WTC11 (cell line): ENCODE measurements at regions of chr2 and their contacts with region 1.

Region 1: GRCh38 chr2:72887754-72888437 is 688 bp downstream of the SPR start:
- DNase-seq: peak; percentile 97
- ATAC-seq: peak; percentile 68
- H3K4me3 Mint-ChIP-seq: peak overlapping the region; percentile 67
- H3K27ac Mint-ChIP-seq: no peak overlapping the region
- H3K4me1 Mint-ChIP-seq: peaks cover 18% of the 10 kb centered on the region
- H3K27me3 Mint-ChIP-seq: peaks cover 58% of the 10 kb centered on the region
- CTCF ChIP-seq: peak; percentile 82

Region 2: DNA sequence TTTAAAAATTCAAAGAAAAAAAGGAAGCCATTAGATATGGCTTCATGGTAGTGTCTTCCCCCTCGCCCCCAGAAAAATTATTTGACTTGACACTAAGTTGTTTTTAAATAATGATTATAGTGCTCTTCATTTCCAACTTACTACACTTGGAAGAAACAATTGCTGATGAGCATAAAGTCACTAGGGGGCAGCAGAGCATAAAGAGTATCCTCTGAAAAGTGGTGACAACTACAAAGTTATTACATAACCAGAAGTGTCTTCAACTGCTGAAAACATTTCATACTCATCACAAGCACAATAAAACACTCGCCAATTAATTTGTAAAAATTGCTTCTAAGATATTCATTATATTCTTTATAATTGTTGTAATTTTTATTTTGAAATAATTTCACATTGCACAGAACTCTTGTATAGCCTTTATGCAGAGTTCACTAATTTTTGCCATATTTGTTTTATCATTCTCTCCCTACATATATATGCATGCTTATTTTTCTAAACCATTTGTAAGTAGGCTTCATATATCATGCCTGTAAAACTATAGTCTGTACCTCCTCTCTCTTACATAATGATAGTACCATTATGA is 116.9 kb before region 1 on chr2:
- CTCF ChIA-PET with region 1: interaction called, 11 read pairs
- POLR2A ChIA-PET with region 1: no interaction called
- DNase-seq: peak; percentile 45
- ATAC-seq: no peak
- H3K4me3 Mint-ChIP-seq: no peak overlapping the region
- H3K27ac Mint-ChIP-seq: no peak overlapping the region
- H3K4me1 Mint-ChIP-seq: peaks cover 18% of the 10 kb centered on the region
- H3K27me3 Mint-ChIP-seq: no peaks in the 10 kb centered on the region
- CTCF ChIP-seq: peak; percentile 61; the same call in 1 of the 2 replicates

Region 3: DNA sequence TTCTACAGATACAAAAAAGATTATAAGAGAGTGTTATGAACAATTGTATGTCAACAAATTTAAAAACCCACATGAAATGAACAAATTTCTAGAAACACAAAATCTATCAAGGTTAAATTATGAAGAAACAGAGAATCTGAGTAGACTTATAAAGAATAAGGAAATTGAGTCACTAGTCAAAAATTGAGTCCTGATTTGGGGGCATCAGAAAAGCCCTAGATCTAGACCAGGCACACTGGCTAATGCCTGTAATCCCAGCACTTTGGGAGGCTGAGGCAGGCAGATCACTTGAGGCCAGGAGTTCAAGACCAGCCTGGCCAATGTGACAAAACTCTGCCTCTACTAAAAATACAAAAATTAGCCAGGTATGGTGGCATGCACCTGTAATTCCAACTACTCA is 16.0 kb before region 1 on chr2:
- CTCF ChIA-PET with region 1: interaction called, 14 read pairs
- POLR2A ChIA-PET with region 1: no interaction called
- DNase-seq: no peak
- ATAC-seq: no peak
- H3K4me3 Mint-ChIP-seq: no peak overlapping the region
- H3K27ac Mint-ChIP-seq: no peak overlapping the region
- H3K4me1 Mint-ChIP-seq: no peaks in the 10 kb centered on the region
- H3K27me3 Mint-ChIP-seq: peaks cover 32% of the 10 kb centered on the region
- CTCF ChIP-seq: no peak

Region 4: DNA sequence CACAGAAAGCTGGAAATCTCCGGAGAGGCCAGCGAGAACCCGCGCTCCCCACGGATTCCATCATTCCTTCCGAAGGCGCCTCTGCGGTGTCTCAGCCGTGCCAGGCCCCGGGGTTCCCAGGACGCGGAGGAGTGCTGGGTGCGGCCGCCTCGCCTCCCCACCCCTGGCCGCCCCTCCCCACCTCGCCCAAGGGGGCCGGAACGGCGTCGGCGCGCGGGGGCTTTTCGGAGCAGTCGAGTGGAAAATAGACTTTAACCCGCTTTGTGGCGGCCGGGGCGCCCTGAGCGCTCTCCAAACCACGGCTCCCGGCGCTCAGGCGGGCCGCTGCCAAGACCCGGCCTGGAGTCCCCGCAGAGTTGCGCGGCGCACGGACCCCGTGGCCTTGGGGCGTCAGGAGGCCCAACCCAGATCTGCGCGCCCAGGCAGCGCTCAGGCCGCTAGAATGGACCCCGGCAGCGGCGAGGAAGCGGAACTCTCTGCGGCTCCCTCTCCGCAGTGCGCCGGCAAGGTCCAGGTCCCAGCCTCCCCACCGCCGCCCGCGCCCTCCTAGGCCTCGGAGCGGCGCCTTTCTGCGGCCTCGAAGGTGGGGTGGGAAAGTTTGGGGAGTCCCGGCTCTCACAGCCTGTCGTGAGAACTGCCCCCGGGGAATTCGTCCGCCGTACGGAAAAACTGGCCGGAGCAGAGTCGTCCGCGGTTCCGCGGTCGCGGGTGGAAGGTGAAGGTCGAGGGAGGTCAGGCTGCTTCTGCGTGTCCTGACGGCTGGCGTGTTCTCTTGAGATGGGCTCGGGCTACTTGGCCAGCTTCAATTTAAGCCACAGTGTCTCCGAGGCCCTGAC is 28.2 kb after region 1 on chr2:
- CTCF ChIA-PET with region 1: interaction called, 165 read pairs
- POLR2A ChIA-PET with region 1: interaction called, 4 read pairs
- DNase-seq: peak; percentile 84
- ATAC-seq: peak; percentile 32
- H3K4me3 Mint-ChIP-seq: peak overlapping the region; percentile 84
- H3K27ac Mint-ChIP-seq: no peak overlapping the region
- H3K4me1 Mint-ChIP-seq: peaks cover 43% of the 10 kb centered on the region
- H3K27me3 Mint-ChIP-seq: peaks cover 61% of the 10 kb centered on the region
- CTCF ChIP-seq: no peak

Region 5: GRCh38 chr2:72953976-72954375 is 66.1 kb after region 1 on chr2:
- CTCF ChIA-PET with region 1: interaction called, 150 read pairs
- POLR2A ChIA-PET with region 1: no interaction called
- DNase-seq: no peak
- ATAC-seq: no peak
- H3K4me3 Mint-ChIP-seq: no peak overlapping the region
- H3K27ac Mint-ChIP-seq: no peak overlapping the region
- H3K4me1 Mint-ChIP-seq: peaks cover 51% of the 10 kb centered on the region
- H3K27me3 Mint-ChIP-seq: no peaks in the 10 kb centered on the region
- CTCF ChIP-seq: no peak

Region 6: GRCh38 chr2:72993147-72993932 is 105.4 kb after region 1 on chr2:
- CTCF ChIA-PET with region 1: interaction called, 35 read pairs
- POLR2A ChIA-PET with region 1: no interaction called
- DNase-seq: peak; percentile 59
- ATAC-seq: peak; percentile 72
- H3K4me3 Mint-ChIP-seq: no peak overlapping the region
- H3K27ac Mint-ChIP-seq: 0 out of 2 replicates have a peak overlapping the region, but pooled peaks have one; percentile 57
- H3K4me1 Mint-ChIP-seq: peaks cover 11% of the 10 kb centered on the region; the same call in 1 of the 2 replicates
- H3K27me3 Mint-ChIP-seq: no peaks in the 10 kb centered on the region; the same call in 1 of the 2 replicates
- CTCF ChIP-seq: peak; percentile 89

Region 7: DNA sequence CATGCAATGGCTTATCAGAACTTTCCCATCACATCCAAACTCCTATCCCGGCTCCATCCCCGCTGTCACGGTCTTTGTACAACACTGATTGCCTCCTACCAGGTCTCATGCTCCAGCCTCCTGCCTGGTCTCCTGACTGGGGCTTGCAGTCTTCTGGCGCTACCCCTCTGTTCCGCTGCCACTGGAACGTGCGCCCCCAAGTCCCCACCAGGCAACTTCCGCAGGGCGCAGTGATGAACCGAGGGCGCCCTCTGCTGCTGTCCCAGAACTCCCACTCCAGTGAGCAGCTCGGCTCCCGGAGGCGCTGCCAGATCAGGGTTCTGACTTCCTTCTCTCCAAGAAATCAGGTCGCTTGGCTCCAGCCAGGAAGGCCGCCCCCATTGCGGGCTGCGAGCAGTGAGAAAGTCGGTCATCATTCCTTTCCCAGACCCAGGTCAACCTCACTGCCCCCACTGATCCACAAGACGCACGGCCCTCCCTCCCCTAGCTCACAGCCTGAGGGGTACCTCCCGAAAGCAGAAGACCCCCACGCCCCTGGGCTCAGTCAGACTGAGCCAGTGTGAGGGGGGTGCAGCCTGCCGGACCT is 268.7 kb after region 1 on chr2:
- CTCF ChIA-PET with region 1: interaction called, 42 read pairs
- POLR2A ChIA-PET with region 1: no interaction called
- DNase-seq: peak; percentile 88
- ATAC-seq: peak; percentile 99
- H3K4me3 Mint-ChIP-seq: peak overlapping the region; percentile 62
- H3K27ac Mint-ChIP-seq: no peak overlapping the region
- H3K4me1 Mint-ChIP-seq: peaks cover 6% of the 10 kb centered on the region
- H3K27me3 Mint-ChIP-seq: peaks cover 24% of the 10 kb centered on the region
- CTCF ChIP-seq: peak; percentile 51